SK-N-SH (cell line): ENCODE measurements at regions of chr19 and their contacts with region 1.

Region 1: GRCh38 chr19:49391581-49392399 is 3.7 kb downstream of the KASH5 start:
- DNase-seq: peak; percentile 88
- H3K4me3 ChIP-seq: peak overlapping the region in 1 of 2 experiments; percentile 33; a peak in 1 of 4 replicates
- H3K27ac ChIP-seq: no peak overlapping the region
- H3K4me1 ChIP-seq: peaks cover 0 to 3% of the 10 kb centered on the region in 2 experiments; a peak in 1 of 4 replicates
- H3K27me3 ChIP-seq: peaks cover 32% of the 10 kb centered on the region
- CTCF ChIP-seq: peak; percentile 85
- EP300 ChIP-seq: no peak
- RAD21 ChIP-seq: peak; percentile 98

Region 2: GRCh38 chr19:49315111-49315510 is 76.7 kb before region 1 on chr19:
- CTCF ChIA-PET with region 1: no interaction called
- POLR2A ChIA-PET with region 1: no interaction called
- DNase-seq: no peak
- H3K4me3 ChIP-seq: no peak overlapping the region
- H3K27ac ChIP-seq: no peak overlapping the region
- H3K4me1 ChIP-seq: no peaks in the 10 kb centered on the region
- H3K27me3 ChIP-seq: no peaks in the 10 kb centered on the region
- CTCF ChIP-seq: no peak
- EP300 ChIP-seq: no peak
- RAD21 ChIP-seq: no peak

Region 3: GRCh38 chr19:49371184-49371583 is 20.6 kb before region 1 on chr19:
- CTCF ChIA-PET with region 1: interaction called, 10 read pairs
- POLR2A ChIA-PET with region 1: no interaction called
- DNase-seq: no peak
- H3K4me3 ChIP-seq: no peak overlapping the region
- H3K27ac ChIP-seq: no peak overlapping the region
- H3K4me1 ChIP-seq: no peaks in the 10 kb centered on the region
- H3K27me3 ChIP-seq: peaks cover 18% of the 10 kb centered on the region; the same call in 1 of the 2 replicates
- CTCF ChIP-seq: no peak
- EP300 ChIP-seq: no peak
- RAD21 ChIP-seq: no peak

Region 4: GRCh38 chr19:49403404-49404187 is 11.8 kb after region 1 on chr19:
- CTCF ChIA-PET with region 1: interaction called, 108 read pairs
- POLR2A ChIA-PET with region 1: no interaction called
- DNase-seq: peak; percentile 3
- H3K4me3 ChIP-seq: no peak overlapping the region
- H3K27ac ChIP-seq: no peak overlapping the region
- H3K4me1 ChIP-seq: no peaks in the 10 kb centered on the region; a peak in 2 of 4 replicates
- H3K27me3 ChIP-seq: no peaks in the 10 kb centered on the region; the same call in 1 of the 2 replicates
- CTCF ChIP-seq: no peak
- EP300 ChIP-seq: no peak
- RAD21 ChIP-seq: no peak

Region 5: GRCh38 chr19:49430678-49431329 is 39.0 kb after region 1 on chr19:
- CTCF ChIA-PET with region 1: interaction called, 51 read pairs
- POLR2A ChIA-PET with region 1: no interaction called
- DNase-seq: peak; percentile 68
- H3K4me3 ChIP-seq: no peak overlapping the region
- H3K27ac ChIP-seq: no peak overlapping the region
- H3K4me1 ChIP-seq: peaks cover 0 to 4% of the 10 kb centered on the region in 2 experiments; a peak in 1 of 4 replicates
- H3K27me3 ChIP-seq: peaks cover 96% of the 10 kb centered on the region
- CTCF ChIP-seq: peak; percentile 54
- EP300 ChIP-seq: no peak
- RAD21 ChIP-seq: peak; percentile 30; the same call in 1 of the 2 replicates

Region 6: DNA sequence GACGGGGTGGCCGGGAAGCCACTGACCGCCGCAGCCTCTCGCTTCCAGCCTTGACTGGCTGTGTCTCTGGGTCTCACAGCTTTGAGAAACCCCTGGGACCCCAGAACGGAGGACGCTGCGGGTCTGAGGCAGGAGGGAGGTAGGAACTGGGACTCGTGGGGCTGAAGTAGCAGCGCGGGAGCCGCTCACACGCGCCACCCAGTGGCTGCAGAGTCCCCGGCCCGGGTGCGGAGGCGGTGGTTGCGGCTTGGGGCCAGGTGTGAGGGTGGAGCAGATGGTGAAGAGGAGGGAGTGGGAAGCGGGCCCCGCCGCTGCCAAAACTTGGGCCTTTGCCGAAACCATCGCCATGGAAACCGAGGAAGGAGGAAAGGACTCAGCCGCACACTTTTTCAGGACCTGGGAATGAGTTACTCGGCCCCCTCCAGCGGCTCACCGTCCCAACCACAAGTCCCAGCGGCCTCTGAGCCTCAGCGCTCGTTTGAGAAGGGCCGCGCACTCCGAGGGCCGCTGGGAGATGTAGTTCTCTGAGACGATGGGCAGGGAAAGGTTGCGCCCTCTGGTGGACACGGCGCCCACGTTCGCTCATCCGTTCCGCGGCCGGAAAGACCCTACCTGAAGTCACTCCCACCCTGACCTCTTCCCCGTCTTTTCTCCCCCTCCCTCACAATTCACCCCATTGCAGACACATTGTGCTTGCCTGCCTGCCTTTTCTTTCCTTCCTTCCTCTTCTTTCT is 51.7 kb after region 1 on chr19:
- CTCF ChIA-PET with region 1: interaction called, 149 read pairs
- POLR2A ChIA-PET with region 1: no interaction called
- DNase-seq: peak; percentile 91
- H3K4me3 ChIP-seq: peak overlapping the region; percentile 62 to 66
- H3K27ac ChIP-seq: peak overlapping the region; percentile 54 to 79
- H3K4me1 ChIP-seq: peaks cover 0 to 22% of the 10 kb centered on the region in 2 experiments; a peak in 1 of 4 replicates
- H3K27me3 ChIP-seq: peaks cover 33% of the 10 kb centered on the region
- CTCF ChIP-seq: peak; percentile 91
- EP300 ChIP-seq: no peak
- RAD21 ChIP-seq: peak; percentile 66

Region 7: GRCh38 chr19:49463965-49464735 is 72.4 kb after region 1 on chr19:
- CTCF ChIA-PET with region 1: no interaction called
- POLR2A ChIA-PET with region 1: no interaction called
- DNase-seq: peak; percentile 21
- H3K4me3 ChIP-seq: no peak overlapping the region
- H3K27ac ChIP-seq: no peak overlapping the region
- H3K4me1 ChIP-seq: no peaks in the 10 kb centered on the region
- H3K27me3 ChIP-seq: no peaks in the 10 kb centered on the region
- CTCF ChIP-seq: no peak
- EP300 ChIP-seq: no peak
- RAD21 ChIP-seq: no peak